K562 (cell line): ENCODE measurements at regions of chr6 and their contacts with region 1.

Region 1: DNA sequence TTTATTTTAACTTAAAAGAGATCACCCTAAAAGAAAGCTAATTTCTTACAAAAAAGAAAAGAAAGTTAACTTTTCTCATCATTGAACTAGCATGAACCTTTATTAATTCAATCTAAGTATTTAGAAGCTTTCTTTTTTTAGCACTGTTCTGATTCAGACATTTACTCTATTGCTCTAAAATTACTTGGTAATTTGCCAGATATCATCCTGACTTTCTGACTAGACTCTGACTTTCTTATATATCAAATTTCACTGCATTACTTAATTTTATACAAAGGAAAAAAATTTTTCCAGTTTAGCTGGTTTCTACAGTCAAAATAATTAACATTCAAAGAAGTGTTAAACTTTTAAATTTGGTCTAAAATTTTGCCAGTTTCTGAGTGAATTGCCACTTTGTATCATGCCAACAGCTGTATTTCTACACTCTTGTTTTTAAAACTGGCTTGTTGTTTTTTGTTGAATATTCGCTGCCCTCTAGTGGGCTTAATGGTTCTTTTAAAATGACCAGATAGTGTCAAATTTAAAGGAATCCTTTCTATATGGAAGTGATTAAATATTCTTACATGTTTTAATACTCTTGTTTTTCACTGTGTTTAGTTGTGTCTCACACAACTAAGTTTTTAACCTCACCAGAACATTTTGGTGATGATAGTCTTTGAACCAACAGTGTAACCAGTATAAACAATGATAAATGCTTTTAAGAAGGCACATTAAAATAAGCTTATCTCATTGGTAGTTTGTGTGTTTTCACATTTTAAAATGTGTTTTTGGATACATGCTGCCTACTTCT is 102.0 kb downstream of the POPDC3 start:
- DNase-seq: peak; percentile 21 to 59 (median 23)
- ATAC-seq: peak; percentile 74
- H3K4me3 ChIP-seq: no peak overlapping the region
- H3K27ac ChIP-seq: no peak overlapping the region
- H3K4me1 ChIP-seq: 0 out of 5 replicates have a peak, but pooled peaks cover 0 to 1% of the 10 kb centered on the region in 2 experiments
- H3K27me3 ChIP-seq: no peaks in the 10 kb centered on the region
- CTCF ChIP-seq: peak; percentile 42 to 75 (median 50); a peak in 3 of 6 replicates
- EP300 ChIP-seq: no peak
- POLR2A ChIP-seq: no peak
- RAD21 ChIP-seq: peak; percentile 88 to 90

Region 2: DNA sequence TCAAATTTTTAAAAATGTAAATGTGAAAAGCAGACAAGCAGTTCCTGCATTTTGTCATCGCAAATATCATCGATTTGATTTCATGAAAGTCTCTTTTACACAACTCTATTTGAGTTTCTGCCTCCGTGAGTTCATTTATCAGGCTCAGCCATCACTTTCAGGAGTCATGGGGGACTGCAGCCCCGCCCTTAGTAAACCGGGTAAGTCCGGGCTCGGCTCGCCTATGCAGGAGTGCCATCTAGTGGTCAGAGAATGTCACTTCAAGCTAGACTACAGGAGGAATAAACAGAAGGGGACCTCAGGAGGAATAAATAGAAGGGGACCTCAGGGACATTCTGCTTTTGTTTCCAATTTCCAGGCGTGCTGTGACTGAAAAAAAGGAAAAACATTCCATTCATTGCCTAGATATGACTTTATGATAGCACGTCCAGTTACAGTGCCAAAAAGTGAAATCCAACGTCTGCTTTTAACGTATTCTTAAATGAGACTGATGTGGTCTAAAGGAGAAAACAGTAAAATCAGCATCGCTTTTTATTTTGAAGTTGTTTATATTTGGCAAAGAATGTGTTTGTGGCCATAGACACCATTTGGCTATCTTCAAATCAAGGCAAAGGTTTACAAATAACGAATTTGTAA is 552.0 kb before region 1 on chr6:
- CTCF ChIA-PET with region 1: no interaction called
- POLR2A ChIA-PET with region 1: no interaction called
- in situ Hi-C with region 1: no loop called
- intact Hi-C with region 1: loop called (anchors 5 kb)
- DNase-seq: peak; percentile 88 to 90 (median 90)
- ATAC-seq: peak; percentile 98
- H3K4me3 ChIP-seq: no peak overlapping the region
- H3K27ac ChIP-seq: no peak overlapping the region
- H3K4me1 ChIP-seq: no peaks in the 10 kb centered on the region
- H3K27me3 ChIP-seq: no peaks in the 10 kb centered on the region
- CTCF ChIP-seq: peak; percentile 81 to 94 (median 87)
- EP300 ChIP-seq: 0 out of 2 replicates have a peak, but pooled peaks have one; percentile 19
- POLR2A ChIP-seq: no peak
- RAD21 ChIP-seq: peak; percentile 93 to 95

Region 3: GRCh38 chr6:104682722-104683643 is 394.8 kb before region 1 on chr6:
- CTCF ChIA-PET with region 1: interaction called, 6 read pairs
- POLR2A ChIA-PET with region 1: no interaction called
- in situ Hi-C with region 1: no loop called
- intact Hi-C with region 1: loop called (anchors 5 kb)
- DNase-seq: peak; percentile 82 to 89 (median 82)
- ATAC-seq: peak; percentile 97
- H3K4me3 ChIP-seq: no peak overlapping the region
- H3K27ac ChIP-seq: no peak overlapping the region
- H3K4me1 ChIP-seq: no peaks in the 10 kb centered on the region; a peak in 1 of 5 replicates
- H3K27me3 ChIP-seq: no peaks in the 10 kb centered on the region
- CTCF ChIP-seq: peak; percentile 88 to 96 (median 94)
- EP300 ChIP-seq: no peak
- POLR2A ChIP-seq: no peak
- RAD21 ChIP-seq: peak; percentile 92 to 93

Region 4: GRCh38 chr6:104789770-104790190 is 288.0 kb before region 1 on chr6:
- CTCF ChIA-PET with region 1: interaction called, 14 read pairs
- POLR2A ChIA-PET with region 1: no interaction called
- in situ Hi-C with region 1: loop called (anchors 10 kb)
- intact Hi-C with region 1: loop called (anchors 2 kb)
- DNase-seq: peak in 3 of 4 experiments; percentile 13 to 52 (median 17)
- ATAC-seq: peak; percentile 92
- H3K4me3 ChIP-seq: no peak overlapping the region
- H3K27ac ChIP-seq: no peak overlapping the region
- H3K4me1 ChIP-seq: no peaks in the 10 kb centered on the region
- H3K27me3 ChIP-seq: no peaks in the 10 kb centered on the region
- CTCF ChIP-seq: peak; percentile 22 to 56 (median 41); a peak in 3 of 6 replicates
- EP300 ChIP-seq: no peak
- POLR2A ChIP-seq: no peak
- RAD21 ChIP-seq: peak; percentile 17 to 55; a peak in 2 of 4 replicates

Region 5: GRCh38 chr6:104896914-104897313 is 180.9 kb before region 1 on chr6:
- CTCF ChIA-PET with region 1: no interaction called
- POLR2A ChIA-PET with region 1: no interaction called
- in situ Hi-C with region 1: no loop called
- intact Hi-C with region 1: loop called (anchors 5 kb)
- DNase-seq: no peak
- ATAC-seq: 0 out of 3 replicates have a peak, but pooled peaks have one; percentile 45
- H3K4me3 ChIP-seq: no peak overlapping the region
- H3K27ac ChIP-seq: no peak overlapping the region
- H3K4me1 ChIP-seq: no peaks in the 10 kb centered on the region
- H3K27me3 ChIP-seq: no peaks in the 10 kb centered on the region
- CTCF ChIP-seq: peak in 1 of 3 experiments; percentile 43; a peak in 2 of 6 replicates
- EP300 ChIP-seq: no peak
- POLR2A ChIP-seq: no peak
- RAD21 ChIP-seq: peak in 1 of 2 experiments; percentile 25; a peak in 1 of 4 replicates

Region 6: DNA sequence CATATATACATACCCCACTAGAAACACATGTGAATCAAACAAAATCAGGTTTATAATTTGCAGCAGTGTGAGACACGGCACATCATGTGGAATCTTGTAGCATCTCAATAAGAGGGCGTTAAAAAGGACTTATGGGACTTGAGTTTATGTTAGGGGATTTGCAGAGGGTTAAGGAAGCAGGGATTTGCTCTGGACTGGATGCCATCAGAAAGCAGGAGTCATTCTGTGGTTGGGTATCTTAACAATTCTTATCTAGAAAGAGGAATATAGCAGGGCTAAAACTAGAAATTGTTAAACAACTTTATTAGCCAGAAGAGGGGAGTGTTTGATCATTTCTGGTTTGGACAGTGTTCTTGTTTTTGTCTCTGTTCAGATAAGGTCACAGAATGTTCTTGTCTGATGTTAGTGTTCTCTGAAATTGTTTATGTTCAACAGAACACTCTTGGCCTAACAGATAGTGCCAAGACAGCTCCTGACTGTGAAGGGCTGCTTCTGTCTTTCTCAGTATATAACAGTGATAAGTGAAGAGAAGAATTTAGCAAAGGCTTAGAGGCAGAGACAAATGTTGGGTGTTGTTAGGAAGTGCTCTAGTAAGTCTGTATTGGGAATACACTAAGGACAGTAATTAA is 81.7 kb before region 1 on chr6:
- CTCF ChIA-PET with region 1: interaction called, 11 read pairs
- POLR2A ChIA-PET with region 1: no interaction called
- in situ Hi-C with region 1: no loop called
- intact Hi-C with region 1: loop called (anchors 1 kb)
- DNase-seq: peak in 2 of 4 experiments; percentile 21 to 44
- ATAC-seq: peak; percentile 88
- H3K4me3 ChIP-seq: no peak overlapping the region
- H3K27ac ChIP-seq: peak overlapping the region; percentile 57; the same call in 2 of the 3 replicates
- H3K4me1 ChIP-seq: peaks cover 0 to 3% of the 10 kb centered on the region in 2 experiments; a peak in 1 of 5 replicates
- H3K27me3 ChIP-seq: no peaks in the 10 kb centered on the region
- CTCF ChIP-seq: peak in 1 of 3 experiments; percentile 53; a peak in 2 of 6 replicates
- EP300 ChIP-seq: no peak; the same call in 1 of the 2 replicates
- POLR2A ChIP-seq: no peak
- RAD21 ChIP-seq: peak; percentile 69 to 79